Activated naive CD4-positive, alpha-beta T cell treated with anti-CD3 and anti-CD28 coated beads for 36 hours (primary cell): ENCODE measurements at regions of chr9 and their contacts with region 1.

Region 1: DNA sequence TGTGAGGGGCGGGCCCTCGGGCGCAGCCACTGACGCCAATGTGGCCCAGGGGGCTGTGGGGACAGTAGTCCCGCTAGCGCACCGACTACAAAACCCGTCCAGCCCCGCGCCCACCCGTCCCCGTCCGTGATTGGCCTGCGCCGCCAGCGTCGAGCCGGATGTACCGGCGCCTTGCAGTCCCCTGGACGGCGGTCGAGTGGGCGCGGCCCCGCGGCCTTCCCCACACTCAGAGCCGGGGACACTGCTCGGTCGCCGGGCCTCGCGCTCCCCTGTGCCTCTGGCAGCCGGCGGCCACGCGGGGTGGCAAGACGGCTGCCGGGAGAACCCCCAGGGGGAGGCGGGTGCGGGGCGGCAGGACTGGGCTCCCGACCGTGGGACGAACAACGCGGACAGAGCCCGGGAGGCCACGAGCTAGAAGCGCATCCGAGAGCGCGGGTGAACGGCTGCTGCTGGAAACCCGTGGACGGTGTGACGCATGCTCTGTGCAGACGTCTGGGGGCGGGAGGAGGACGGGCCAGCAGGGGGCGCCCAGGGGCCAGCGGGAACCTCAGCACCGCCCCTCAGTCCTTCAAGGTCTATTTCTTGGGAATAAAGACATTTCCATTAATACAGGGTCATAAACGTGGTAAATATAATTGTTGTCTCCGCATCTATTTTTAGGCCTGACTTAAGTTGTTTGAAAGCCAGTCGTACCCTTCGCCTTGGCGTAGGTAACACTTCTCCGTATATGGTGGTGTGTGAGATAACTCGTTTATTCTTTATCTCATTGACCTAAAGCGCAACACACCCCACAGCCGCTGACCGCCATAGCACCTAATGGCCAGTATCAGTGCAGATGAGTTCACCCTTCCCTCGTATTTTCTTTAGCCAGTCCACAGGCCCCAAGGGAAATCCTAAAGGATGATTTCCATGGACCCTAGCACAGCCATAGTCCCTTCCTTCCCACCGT is 629 bp upstream of the BICD2 start:
- DNase-seq: peak; percentile 99
- H3K4me3 Mint-ChIP-seq: peak overlapping the region; percentile 84
- H3K27ac Mint-ChIP-seq: peak overlapping the region; percentile 91
- H3K4me1 Mint-ChIP-seq: peaks cover 49% of the 10 kb centered on the region
- H3K27me3 Mint-ChIP-seq: no peaks in the 10 kb centered on the region

Region 2: DNA sequence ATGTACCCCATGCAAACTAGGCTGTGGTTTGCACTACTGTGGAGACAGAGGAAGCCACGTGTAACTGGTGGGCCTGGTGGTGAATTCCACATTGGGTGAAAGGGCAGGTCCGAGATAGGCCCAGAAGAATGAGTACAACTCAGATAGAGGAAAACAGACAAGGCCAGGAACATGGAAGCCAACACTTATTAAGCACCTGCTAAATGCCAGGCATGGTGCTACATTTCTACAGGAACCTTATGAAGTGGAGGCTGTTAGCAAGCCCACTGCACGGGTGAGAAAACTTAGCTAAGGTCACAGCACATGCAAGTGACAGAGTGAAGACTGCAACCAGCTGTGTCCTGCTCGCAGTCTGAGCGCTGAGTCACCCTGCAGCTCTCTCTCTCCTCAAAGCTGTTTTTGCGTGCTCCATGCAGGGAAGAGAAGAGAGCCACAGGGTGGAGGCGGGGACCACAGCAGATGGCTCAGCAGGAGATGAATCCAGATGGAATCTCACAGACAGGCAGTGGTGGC is 584.5 kb before region 1 on chr9:
- CTCF ChIA-PET with region 1: no interaction called
- intact Hi-C with region 1: no loop called
- DNase-seq: no peak
- H3K4me3 Mint-ChIP-seq: no peak overlapping the region
- H3K27ac Mint-ChIP-seq: no peak overlapping the region
- H3K4me1 Mint-ChIP-seq: no peaks in the 10 kb centered on the region
- H3K27me3 Mint-ChIP-seq: no peaks in the 10 kb centered on the region

Region 3: DNA sequence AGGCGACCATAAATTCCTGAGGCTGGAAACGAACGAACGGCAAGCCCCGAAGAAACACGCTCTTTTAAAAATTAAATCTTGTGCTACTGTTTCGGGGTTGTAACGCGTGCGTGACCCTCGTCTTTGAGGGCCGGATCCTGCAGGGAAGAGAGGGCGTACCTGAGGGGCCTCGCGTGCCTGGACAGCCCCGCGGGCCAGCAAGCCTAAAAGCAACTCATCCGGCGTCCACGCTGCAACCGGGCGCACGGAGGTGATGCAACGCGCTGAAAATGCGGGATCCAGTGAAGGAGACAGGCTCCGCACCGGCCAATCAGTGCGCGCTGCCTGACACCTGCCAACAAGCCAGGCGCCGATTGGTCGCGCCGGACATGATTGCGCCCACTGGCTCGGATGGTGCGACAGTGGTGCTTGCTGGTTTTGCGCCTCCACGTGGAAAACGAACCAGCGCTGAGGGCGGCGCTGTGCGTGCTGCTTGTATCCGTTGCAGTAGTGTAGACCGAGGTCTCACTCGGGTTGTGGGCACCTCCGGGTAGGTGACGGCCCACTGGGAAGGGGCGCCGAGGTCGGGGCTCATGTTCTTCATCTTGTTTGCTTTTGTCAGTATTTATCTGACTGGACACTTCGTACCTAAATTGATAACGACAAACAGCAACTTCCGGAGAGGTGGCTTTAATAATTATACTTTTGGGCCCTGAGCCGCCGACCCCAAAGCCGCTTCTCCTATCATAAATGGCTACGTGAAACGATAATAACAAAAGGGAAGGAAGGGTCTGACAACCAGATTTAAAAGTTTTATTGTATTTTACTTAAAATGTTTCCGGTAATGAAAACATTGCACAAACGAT is 471.6 kb before region 1 on chr9 and contains the start of gene IARS1:
- CTCF ChIA-PET with region 1: no interaction called
- intact Hi-C with region 1: loop called (anchors 1 kb)
- DNase-seq: peak; percentile 100
- H3K4me3 Mint-ChIP-seq: peak within 1 kb of the TSS; percentile 95
- H3K27ac Mint-ChIP-seq: peak within 1 kb of the TSS; percentile 97
- H3K4me1 Mint-ChIP-seq: peaks cover 49% of the 10 kb centered on the region
- H3K27me3 Mint-ChIP-seq: no peaks in the 10 kb centered on the region
- total RNA-seq, gene IARS1: 271 to 272 TPM

Region 4: GRCh38 chr9:92716557-92716956 is 48.7 kb before region 1 on chr9:
- CTCF ChIA-PET with region 1: interaction called, 13 read pairs
- intact Hi-C with region 1: loop called (anchors 2 kb)
- DNase-seq: peak; percentile 87
- H3K4me3 Mint-ChIP-seq: no peak overlapping the region
- H3K27ac Mint-ChIP-seq: no peak overlapping the region
- H3K4me1 Mint-ChIP-seq: peaks cover 14% of the 10 kb centered on the region
- H3K27me3 Mint-ChIP-seq: no peaks in the 10 kb centered on the region

Region 5: DNA sequence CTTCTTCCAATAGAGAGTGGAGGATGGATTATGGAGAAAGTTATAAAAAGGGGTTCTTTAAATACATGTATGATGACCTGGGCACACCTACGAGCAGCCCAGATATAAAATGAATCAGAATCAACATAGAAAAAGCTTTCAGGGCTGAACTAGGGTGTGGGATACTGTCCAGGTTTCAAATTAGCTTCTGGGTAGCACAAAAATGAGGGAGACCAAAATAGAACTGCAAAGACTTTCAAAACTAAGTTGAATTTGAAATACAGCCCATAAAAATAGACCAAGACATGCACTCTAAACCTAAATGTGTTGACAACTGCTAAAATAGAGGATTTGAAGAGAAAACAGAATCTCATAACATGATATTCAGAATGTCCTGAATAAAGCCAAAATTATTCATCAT is 95.6 kb after region 1 on chr9:
- CTCF ChIA-PET with region 1: no interaction called
- intact Hi-C with region 1: no loop called
- DNase-seq: no peak
- H3K4me3 Mint-ChIP-seq: no peak overlapping the region
- H3K27ac Mint-ChIP-seq: no peak overlapping the region
- H3K4me1 Mint-ChIP-seq: peaks cover 40% of the 10 kb centered on the region
- H3K27me3 Mint-ChIP-seq: no peaks in the 10 kb centered on the region

Region 6: GRCh38 chr9:92877531-92878430 is 112.5 kb after region 1 on chr9 and contains the start of gene ZNF484:
- CTCF ChIA-PET with region 1: no interaction called
- intact Hi-C with region 1: loop called (anchors 1 kb)
- DNase-seq: peak; percentile 99
- H3K4me3 Mint-ChIP-seq: peak within 1 kb of the TSS; percentile 87
- H3K27ac Mint-ChIP-seq: peak within 1 kb of the TSS; percentile 94
- H3K4me1 Mint-ChIP-seq: peaks cover 40% of the 10 kb centered on the region
- H3K27me3 Mint-ChIP-seq: no peaks in the 10 kb centered on the region
- total RNA-seq, gene ZNF484: 5.8 to 6.5 TPM

Region 7: GRCh38 chr9:93453047-93453914 is 688.0 kb after region 1 on chr9 and contains the start of gene FAM120AOS:
- CTCF ChIA-PET with region 1: no interaction called
- intact Hi-C with region 1: loop called (anchors 2 kb)
- DNase-seq: peak; percentile 92
- H3K4me3 Mint-ChIP-seq: peak within 1 kb of the TSS; percentile 87
- H3K27ac Mint-ChIP-seq: peak within 1 kb of the TSS; percentile 84
- H3K4me1 Mint-ChIP-seq: peaks cover 45% of the 10 kb centered on the region
- H3K27me3 Mint-ChIP-seq: no peaks in the 10 kb centered on the region
- total RNA-seq, gene FAM120AOS: 25.5 to 26.0 TPM

Region 8: DNA sequence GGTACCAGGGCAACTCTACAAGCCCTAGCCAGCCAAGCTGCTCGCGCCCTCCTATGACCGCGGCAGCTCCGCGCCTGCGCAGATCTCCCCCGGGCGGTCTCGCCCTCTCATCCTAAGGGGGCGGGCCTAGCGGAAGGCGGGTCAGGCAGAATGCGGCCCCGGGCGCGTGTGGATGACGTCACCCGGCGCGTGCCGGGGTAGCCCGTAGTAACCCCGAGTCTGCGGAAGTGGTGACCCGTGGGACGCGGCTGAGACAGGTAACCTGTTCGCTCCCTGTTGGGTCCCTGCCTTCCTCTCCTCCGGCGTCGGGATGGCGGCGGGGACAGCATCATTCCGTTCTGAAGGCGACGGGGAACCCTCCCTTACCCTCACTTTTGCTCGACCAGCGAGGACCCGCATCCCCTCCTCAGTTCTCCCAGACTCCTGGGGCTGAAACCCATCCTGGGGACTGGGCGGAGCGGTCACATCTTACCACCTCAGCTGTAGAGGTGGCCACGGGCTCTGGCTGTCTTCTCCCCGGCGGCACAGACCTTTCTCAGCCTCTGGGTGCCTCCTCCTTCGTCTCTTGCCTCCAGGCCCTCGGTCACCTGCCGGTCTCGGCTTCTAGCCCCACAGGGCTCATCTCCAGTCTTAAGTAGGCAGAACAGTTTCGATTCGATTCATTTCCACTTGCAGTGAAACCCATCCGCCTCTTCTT is 1961.4 kb after region 1 on chr9 and contains the start of gene AOPEP:
- CTCF ChIA-PET with region 1: no interaction called
- intact Hi-C with region 1: loop called (anchors 10 kb)
- DNase-seq: peak; percentile 99
- H3K4me3 Mint-ChIP-seq: peak within 1 kb of the TSS; percentile 99
- H3K27ac Mint-ChIP-seq: peak within 1 kb of the TSS; percentile 95
- H3K4me1 Mint-ChIP-seq: peaks cover 12% of the 10 kb centered on the region
- H3K27me3 Mint-ChIP-seq: no peaks in the 10 kb centered on the region
- total RNA-seq, gene AOPEP: 5.8 to 6.4 TPM